ENCODE measurements at regions of chr1 and their contacts with region 1.

Region 1: GRCh38 chr1:156140879-156141252 is 12.5 kb upstream of the SEMA4A start:
- DNase-seq: no peak
- ATAC-seq: no peak
- H3K4me3 Mint-ChIP-seq: no peak overlapping the region
- H3K27ac Mint-ChIP-seq: peak overlapping the region; percentile 5
- H3K4me1 Mint-ChIP-seq: peaks cover 4% of the 10 kb centered on the region
- H3K27me3 Mint-ChIP-seq: no peaks in the 10 kb centered on the region

Region 2: DNA sequence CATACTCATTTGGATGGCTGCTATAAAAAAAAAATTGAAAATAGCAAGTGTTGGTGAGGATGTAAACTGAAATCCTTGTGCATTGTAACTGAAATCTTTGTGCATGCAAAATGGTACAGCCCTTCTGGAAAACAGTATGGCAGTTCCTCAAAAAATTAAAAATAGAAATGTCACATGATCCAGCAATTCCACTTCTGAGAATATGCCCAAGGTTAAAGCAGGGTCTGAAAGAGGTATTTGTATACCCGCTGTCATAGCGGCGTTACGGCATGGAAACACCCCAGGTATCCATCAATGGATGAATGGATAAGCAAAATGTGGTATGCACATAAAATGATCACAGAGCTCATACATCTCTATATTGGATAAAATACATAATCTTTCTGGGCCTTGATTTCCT is 703.5 kb before region 1 on chr1:
- CTCF ChIA-PET with region 1: no interaction called
- POLR2A ChIA-PET with region 1: no interaction called
- intact Hi-C with region 1: no loop called
- DNase-seq: no peak
- ATAC-seq: no peak
- H3K4me3 Mint-ChIP-seq: no peak overlapping the region
- H3K27ac Mint-ChIP-seq: no peak overlapping the region
- H3K4me1 Mint-ChIP-seq: peaks cover 4% of the 10 kb centered on the region
- H3K27me3 Mint-ChIP-seq: no peaks in the 10 kb centered on the region

Region 3: GRCh38 chr1:156233426-156234127 is 92.7 kb after region 1 on chr1:
- CTCF ChIA-PET with region 1: interaction called, 229 read pairs
- POLR2A ChIA-PET with region 1: no interaction called
- intact Hi-C with region 1: no loop called
- DNase-seq: no peak
- ATAC-seq: no peak
- H3K4me3 Mint-ChIP-seq: no peak overlapping the region
- H3K27ac Mint-ChIP-seq: no peak overlapping the region
- H3K4me1 Mint-ChIP-seq: peaks cover 4% of the 10 kb centered on the region
- H3K27me3 Mint-ChIP-seq: no peaks in the 10 kb centered on the region

Measured in activated CD4-positive, alpha-beta T cell treated with anti-CD3 and anti-CD28 coated beads for 36 hours (primary cell).